ENCODE measurements at regions of chr5 and their contacts with region 1.

Region 1: GRCh38 chr5:136212252-136212721 is 19.3 kb upstream of the SMIM32 start:
- DNase-seq: peak; percentile 54
- ATAC-seq: no peak
- H3K4me3 ChIP-seq: no peak overlapping the region
- H3K4me3 Mint-ChIP-seq: no peak overlapping the region
- H3K27ac ChIP-seq: no peak overlapping the region
- H3K27ac Mint-ChIP-seq: no peak overlapping the region
- H3K4me1 ChIP-seq: no peaks in the 10 kb centered on the region
- H3K4me1 Mint-ChIP-seq: no peaks in the 10 kb centered on the region
- H3K27me3 ChIP-seq: peaks cover 0 to 11% (median 2%) of the 10 kb centered on the region in 4 experiments
- H3K27me3 Mint-ChIP-seq: peaks cover 32% of the 10 kb centered on the region
- CTCF ChIP-seq: peak; percentile 88

Region 2: GRCh38 chr5:135466178-135467050 is 745.9 kb before region 1 on chr5:
- CTCF ChIA-PET with region 1: interaction called, 7 read pairs
- POLR2A ChIA-PET with region 1: no interaction called
- intact Hi-C with region 1: loop called (anchors 2 kb)
- DNase-seq: peak; percentile 62
- ATAC-seq: peak; percentile 54
- H3K4me3 ChIP-seq: peak overlapping the region in 2 of 5 experiments; percentile 18 to 30
- H3K4me3 Mint-ChIP-seq: peak overlapping the region; percentile 62
- H3K27ac ChIP-seq: no peak overlapping the region
- H3K27ac Mint-ChIP-seq: no peak overlapping the region
- H3K4me1 ChIP-seq: peaks cover 9% of the 10 kb centered on the region in 2 donors
- H3K4me1 Mint-ChIP-seq: peaks cover 13% of the 10 kb centered on the region
- H3K27me3 ChIP-seq: peaks cover 0 to 32% (median 8%) of the 10 kb centered on the region in 4 experiments
- H3K27me3 Mint-ChIP-seq: peaks cover 58% of the 10 kb centered on the region
- CTCF ChIP-seq: peak; percentile 64

Region 3: DNA sequence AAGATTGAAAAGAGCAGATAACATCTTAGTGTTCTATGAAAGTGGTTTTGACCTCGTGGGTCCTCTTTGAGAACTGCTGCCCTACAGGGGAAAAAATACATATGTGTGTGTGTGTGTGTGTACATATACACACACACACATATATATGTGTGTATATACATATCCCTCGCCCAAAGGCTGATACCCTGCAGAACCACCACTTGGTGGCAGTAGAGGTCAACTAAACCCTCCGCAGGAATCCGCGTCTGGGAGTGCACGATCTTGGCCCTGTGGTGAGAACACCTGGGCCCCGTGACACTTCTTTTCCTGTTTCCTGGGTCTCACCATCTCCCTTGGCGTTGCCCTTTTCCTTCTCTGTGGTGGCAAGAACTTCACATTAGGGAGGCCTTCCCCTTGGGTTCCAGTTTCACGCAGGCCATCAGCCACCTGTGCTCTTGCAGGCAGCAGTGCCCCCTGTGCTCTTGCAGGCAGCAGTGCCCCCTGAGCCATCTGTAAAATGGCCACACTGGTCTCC is 324.9 kb before region 1 on chr5:
- CTCF ChIA-PET with region 1: interaction called, 23 read pairs
- POLR2A ChIA-PET with region 1: no interaction called
- intact Hi-C with region 1: no loop called
- DNase-seq: peak; percentile 67
- ATAC-seq: peak; percentile 75
- H3K4me3 ChIP-seq: no peak overlapping the region
- H3K4me3 Mint-ChIP-seq: peak overlapping the region; percentile 66
- H3K27ac ChIP-seq: no peak overlapping the region
- H3K27ac Mint-ChIP-seq: no peak overlapping the region
- H3K4me1 ChIP-seq: peaks cover 0 to 5% of the 10 kb centered on the region in 2 donors
- H3K4me1 Mint-ChIP-seq: peaks cover 5% of the 10 kb centered on the region
- H3K27me3 ChIP-seq: no peaks in the 10 kb centered on the region
- H3K27me3 Mint-ChIP-seq: peaks cover 13% of the 10 kb centered on the region
- CTCF ChIP-seq: peak; percentile 81

Region 4: DNA sequence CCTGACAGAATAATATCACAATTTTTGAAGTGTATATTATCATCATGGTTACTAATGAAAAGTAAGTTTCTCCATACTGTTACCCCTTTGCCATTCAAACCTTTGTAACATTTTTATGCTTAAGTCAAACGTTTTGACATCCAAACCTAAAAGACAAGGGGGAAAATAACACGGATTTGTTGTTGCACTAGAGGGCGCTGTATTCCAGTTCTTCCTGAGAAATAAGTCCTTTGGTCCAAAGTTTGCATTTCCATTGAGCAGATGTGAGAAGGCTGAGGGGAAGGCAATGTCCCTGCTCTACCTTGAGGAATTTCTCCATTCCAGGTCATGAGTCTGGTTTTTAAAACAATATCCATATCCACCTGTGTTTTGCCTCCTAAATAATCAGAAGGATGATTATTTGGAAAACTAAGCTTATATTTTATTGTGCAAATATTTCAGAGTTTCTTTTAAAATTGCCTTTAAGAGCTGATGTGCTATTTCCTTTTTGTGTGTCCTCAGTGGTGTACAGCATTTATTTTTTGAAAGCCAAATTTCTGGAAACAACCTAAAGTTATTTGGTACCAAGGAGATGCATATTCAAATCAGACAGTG is 267.2 kb before region 1 on chr5:
- CTCF ChIA-PET with region 1: interaction called, 15 read pairs
- POLR2A ChIA-PET with region 1: no interaction called
- intact Hi-C with region 1: loop called (anchors 1 kb)
- DNase-seq: peak; percentile 43
- ATAC-seq: no peak
- H3K4me3 ChIP-seq: no peak overlapping the region
- H3K4me3 Mint-ChIP-seq: no peak overlapping the region
- H3K27ac ChIP-seq: no peak overlapping the region
- H3K27ac Mint-ChIP-seq: no peak overlapping the region
- H3K4me1 ChIP-seq: no peaks in the 10 kb centered on the region
- H3K4me1 Mint-ChIP-seq: no peaks in the 10 kb centered on the region
- H3K27me3 ChIP-seq: peaks cover 0 to 4% (median 0%) of the 10 kb centered on the region in 4 experiments
- H3K27me3 Mint-ChIP-seq: peaks cover 11% of the 10 kb centered on the region
- CTCF ChIP-seq: peak; percentile 76

Region 5: GRCh38 chr5:136073714-136074529 is 138.4 kb before region 1 on chr5:
- CTCF ChIA-PET with region 1: no interaction called
- POLR2A ChIA-PET with region 1: no interaction called
- intact Hi-C with region 1: no loop called
- DNase-seq: no peak
- ATAC-seq: no peak
- H3K4me3 ChIP-seq: no peak overlapping the region
- H3K4me3 Mint-ChIP-seq: no peak overlapping the region
- H3K27ac ChIP-seq: no peak overlapping the region
- H3K27ac Mint-ChIP-seq: no peak overlapping the region
- H3K4me1 ChIP-seq: no peaks in the 10 kb centered on the region
- H3K4me1 Mint-ChIP-seq: peaks cover 4% of the 10 kb centered on the region
- H3K27me3 ChIP-seq: peaks cover 0 to 33% (median 8%) of the 10 kb centered on the region in 4 experiments
- H3K27me3 Mint-ChIP-seq: peaks cover 36% of the 10 kb centered on the region
- CTCF ChIP-seq: no peak

Region 6: DNA sequence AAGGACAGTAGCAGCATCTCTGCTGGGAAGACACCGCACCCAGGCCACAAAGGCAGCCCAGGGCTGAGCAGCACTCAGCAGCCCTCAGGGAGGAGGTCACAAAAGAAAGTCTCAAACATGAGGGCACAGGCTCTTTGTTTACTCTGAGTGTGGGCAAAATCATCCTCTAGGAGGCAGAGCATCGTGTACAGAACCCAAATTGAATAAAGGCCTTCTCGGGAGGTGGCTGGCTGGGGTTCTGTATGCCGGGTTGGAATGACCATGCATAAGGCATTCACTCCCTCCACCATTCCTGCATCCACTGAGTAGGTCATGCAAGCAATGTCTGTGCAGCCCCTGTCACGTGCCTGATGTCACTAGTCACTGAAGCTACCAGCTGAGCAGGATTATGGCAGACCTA is 874.1 kb after region 1 on chr5:
- CTCF ChIA-PET with region 1: no interaction called
- POLR2A ChIA-PET with region 1: no interaction called
- intact Hi-C with region 1: no loop called
- DNase-seq: no peak
- ATAC-seq: no peak
- H3K4me3 ChIP-seq: no peak overlapping the region
- H3K4me3 Mint-ChIP-seq: no peak overlapping the region
- H3K27ac ChIP-seq: no peak overlapping the region
- H3K27ac Mint-ChIP-seq: no peak overlapping the region
- H3K4me1 ChIP-seq: no peaks in the 10 kb centered on the region
- H3K4me1 Mint-ChIP-seq: no peaks in the 10 kb centered on the region
- H3K27me3 ChIP-seq: no peaks in the 10 kb centered on the region
- H3K27me3 Mint-ChIP-seq: no peaks in the 10 kb centered on the region
- CTCF ChIP-seq: no peak

Measured in B cell (primary cell).